Naive thymus-derived CD4-positive, alpha-beta T cell (primary cell): ENCODE measurements at regions of chr10 and their contacts with region 1.

Region 1: GRCh38 chr10:11472158-11472753 is 139.2 kb downstream of the USP6NL start:
- DNase-seq: peak; percentile 51 to 74 (median 63)
- ATAC-seq: peak; percentile 94
- H3K4me3 ChIP-seq: no peak overlapping the region
- H3K4me3 Mint-ChIP-seq: no peak overlapping the region
- H3K27ac ChIP-seq: no peak overlapping the region
- H3K27ac Mint-ChIP-seq: peak overlapping the region in 3 of 9 donors; percentile 41 to 85 (median 56)
- H3K4me1 ChIP-seq: no peaks in the 10 kb centered on the region
- H3K4me1 Mint-ChIP-seq: peaks cover 0 to 4% (median 0%) of the 10 kb centered on the region in 7 donors
- H3K27me3 ChIP-seq: no peaks in the 10 kb centered on the region
- H3K27me3 Mint-ChIP-seq: peaks cover 0 to 6% (median 0%) of the 10 kb centered on the region in 5 donors

Region 2: DNA sequence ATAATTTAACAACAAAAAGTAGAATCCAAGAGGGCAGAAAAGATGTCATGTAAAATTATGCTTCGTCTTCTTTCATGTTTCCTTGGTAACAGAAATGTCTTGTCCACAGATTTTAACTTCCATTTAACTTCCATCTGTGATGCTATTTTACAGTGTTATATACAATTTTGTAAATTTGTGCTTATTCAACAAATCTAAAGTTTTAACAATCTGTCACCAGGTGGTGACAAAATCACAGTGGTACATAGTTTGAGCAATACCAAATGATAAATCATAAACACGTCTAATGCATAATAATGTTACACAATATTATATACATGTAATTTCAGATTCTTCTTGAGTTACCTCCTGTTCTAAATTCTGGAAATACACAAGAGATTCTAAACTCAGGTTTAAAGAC is 1239.0 kb before region 1 on chr10:
- CTCF ChIA-PET with region 1: no interaction called
- POLR2A ChIA-PET with region 1: no interaction called
- intact Hi-C with region 1: loop called in 1 of 2 experiments (anchors 10 kb)
- DNase-seq: no peak
- ATAC-seq: no peak
- H3K4me3 ChIP-seq: no peak overlapping the region
- H3K4me3 Mint-ChIP-seq: no peak overlapping the region
- H3K27ac ChIP-seq: no peak overlapping the region
- H3K27ac Mint-ChIP-seq: no peak overlapping the region
- H3K4me1 ChIP-seq: no peaks in the 10 kb centered on the region
- H3K4me1 Mint-ChIP-seq: peaks cover 0 to 2% (median 0%) of the 10 kb centered on the region in 7 donors
- H3K27me3 ChIP-seq: no peaks in the 10 kb centered on the region
- H3K27me3 Mint-ChIP-seq: peaks cover 0 to 23% (median 17%) of the 10 kb centered on the region in 5 donors

Region 3: DNA sequence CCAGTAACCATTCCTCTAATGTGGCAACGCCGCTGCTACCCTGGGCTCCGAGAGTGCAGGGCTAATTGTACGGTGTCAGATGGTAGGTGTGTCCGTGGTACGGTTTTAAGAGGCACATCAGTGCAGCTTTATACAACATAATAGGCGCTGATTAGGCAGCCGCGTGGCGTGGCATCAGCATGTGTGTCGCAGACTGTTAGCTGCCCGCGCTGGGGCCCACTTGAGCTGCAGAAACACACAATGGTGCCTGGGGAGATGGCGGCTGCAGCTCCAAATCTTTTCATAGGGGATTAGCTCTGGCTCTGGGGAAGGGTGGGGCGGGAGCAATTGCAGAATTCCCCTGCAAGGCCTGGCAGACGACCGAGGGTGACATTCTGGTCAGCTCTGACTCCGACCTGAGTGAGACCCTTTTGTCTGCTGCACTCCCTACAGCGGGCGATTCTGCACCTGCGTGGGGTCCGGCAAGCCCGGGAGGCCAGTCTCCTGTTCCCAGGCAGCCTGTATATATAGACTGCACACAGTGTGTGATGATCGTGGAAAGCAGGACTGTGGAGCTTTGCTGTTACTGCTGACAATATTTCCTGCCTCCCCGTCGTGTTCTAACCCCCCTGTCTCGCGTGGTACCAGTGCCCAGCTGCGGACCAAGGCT is 1177.3 kb before region 1 on chr10:
- CTCF ChIA-PET with region 1: no interaction called
- POLR2A ChIA-PET with region 1: no interaction called
- intact Hi-C with region 1: no loop called
- DNase-seq: no peak
- ATAC-seq: no peak
- H3K4me3 ChIP-seq: no peak overlapping the region
- H3K4me3 Mint-ChIP-seq: no peak overlapping the region
- H3K27ac ChIP-seq: no peak overlapping the region
- H3K27ac Mint-ChIP-seq: no peak overlapping the region
- H3K4me1 ChIP-seq: no peaks in the 10 kb centered on the region
- H3K4me1 Mint-ChIP-seq: peaks cover 0 to 1% (median 0%) of the 10 kb centered on the region in 7 donors
- H3K27me3 ChIP-seq: no peaks in the 10 kb centered on the region
- H3K27me3 Mint-ChIP-seq: peaks cover 0 to 5% (median 0%) of the 10 kb centered on the region in 5 donors

Region 4: GRCh38 chr10:11113156-11113555 is 359.1 kb before region 1 on chr10:
- CTCF ChIA-PET with region 1: no interaction called
- POLR2A ChIA-PET with region 1: no interaction called
- intact Hi-C with region 1: loop called (anchors 1 to 5 kb)
- DNase-seq: peak in 7 of 9 donors; percentile 48 to 69 (median 65)
- ATAC-seq: peak; percentile 97
- H3K4me3 ChIP-seq: no peak overlapping the region
- H3K4me3 Mint-ChIP-seq: peak overlapping the region in 9 of 10 donors; percentile 12 to 85 (median 63)
- H3K27ac ChIP-seq: peak overlapping the region; percentile 9
- H3K27ac Mint-ChIP-seq: peak overlapping the region in 8 of 9 donors; percentile 0 to 92 (median 72)
- H3K4me1 ChIP-seq: peaks cover 0 to 9% of the 10 kb centered on the region in 2 donors
- H3K4me1 Mint-ChIP-seq: peaks cover 10 to 56% (median 38%) of the 10 kb centered on the region in 7 donors
- H3K27me3 ChIP-seq: no peaks in the 10 kb centered on the region
- H3K27me3 Mint-ChIP-seq: peaks cover 0 to 5% (median 0%) of the 10 kb centered on the region in 5 donors

Region 5: GRCh38 chr10:11264296-11265048 is 207.8 kb before region 1 on chr10:
- CTCF ChIA-PET with region 1: no interaction called
- POLR2A ChIA-PET with region 1: no interaction called
- intact Hi-C with region 1: loop called in 1 of 2 experiments (anchors 5 kb)
- DNase-seq: no peak
- ATAC-seq: no peak
- H3K4me3 ChIP-seq: no peak overlapping the region
- H3K4me3 Mint-ChIP-seq: peak overlapping the region in 4 of 10 donors; percentile 13 to 38 (median 34)
- H3K27ac ChIP-seq: peak overlapping the region; percentile 22
- H3K27ac Mint-ChIP-seq: peak overlapping the region in 8 of 9 donors; percentile 57 to 87 (median 74)
- H3K4me1 ChIP-seq: peaks cover 18 to 22% of the 10 kb centered on the region in 2 donors
- H3K4me1 Mint-ChIP-seq: peaks cover 58 to 99% (median 94%) of the 10 kb centered on the region in 7 donors
- H3K27me3 ChIP-seq: no peaks in the 10 kb centered on the region
- H3K27me3 Mint-ChIP-seq: no peaks in the 10 kb centered on the region

Region 6: DNA sequence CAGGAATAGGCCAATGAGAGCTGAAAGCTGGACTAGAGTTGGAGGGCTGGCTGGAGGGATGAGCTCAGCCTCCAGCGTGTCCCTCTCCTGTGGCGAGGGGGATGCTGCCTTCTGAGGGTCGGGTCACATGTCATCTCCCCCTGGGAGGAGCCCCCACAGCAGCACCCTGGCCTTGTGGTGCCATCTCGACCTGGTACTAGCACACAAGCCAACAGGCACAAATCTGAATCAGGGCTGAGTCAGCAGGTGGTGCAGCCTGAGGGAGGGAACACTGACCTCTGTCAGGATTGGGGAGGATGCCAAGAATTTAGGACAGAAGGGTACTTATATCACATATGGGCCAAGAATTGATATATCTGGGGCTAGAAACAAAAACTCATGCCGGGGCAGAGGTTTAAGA is 174.1 kb before region 1 on chr10:
- CTCF ChIA-PET with region 1: no interaction called
- POLR2A ChIA-PET with region 1: no interaction called
- intact Hi-C with region 1: no loop called
- DNase-seq: no peak
- ATAC-seq: no peak
- H3K4me3 ChIP-seq: no peak overlapping the region
- H3K4me3 Mint-ChIP-seq: no peak overlapping the region
- H3K27ac ChIP-seq: no peak overlapping the region
- H3K27ac Mint-ChIP-seq: peak overlapping the region; percentile 1 to 82 (median 65)
- H3K4me1 ChIP-seq: no peaks in the 10 kb centered on the region
- H3K4me1 Mint-ChIP-seq: peaks cover 0 to 42% (median 28%) of the 10 kb centered on the region in 7 donors
- H3K27me3 ChIP-seq: no peaks in the 10 kb centered on the region
- H3K27me3 Mint-ChIP-seq: no peaks in the 10 kb centered on the region

Region 7: GRCh38 chr10:11335167-11335652 is 137.0 kb before region 1 on chr10:
- CTCF ChIA-PET with region 1: no interaction called
- POLR2A ChIA-PET with region 1: interaction called, 3 read pairs
- intact Hi-C with region 1: loop called (anchors 5 to 10 kb)
- DNase-seq: no peak
- ATAC-seq: peak; percentile 55
- H3K4me3 ChIP-seq: no peak overlapping the region
- H3K4me3 Mint-ChIP-seq: peak overlapping the region in 3 of 10 donors; percentile 1 to 52 (median 44)
- H3K27ac ChIP-seq: no peak overlapping the region
- H3K27ac Mint-ChIP-seq: peak overlapping the region; percentile 1 to 90 (median 77)
- H3K4me1 ChIP-seq: peaks cover 0 to under 1% of the 10 kb centered on the region in 2 donors
- H3K4me1 Mint-ChIP-seq: peaks cover 7 to 64% (median 51%) of the 10 kb centered on the region in 7 donors
- H3K27me3 ChIP-seq: no peaks in the 10 kb centered on the region
- H3K27me3 Mint-ChIP-seq: no peaks in the 10 kb centered on the region

Region 8: GRCh38 chr10:11403116-11403515 is 69.1 kb before region 1 on chr10:
- CTCF ChIA-PET with region 1: no interaction called
- POLR2A ChIA-PET with region 1: no interaction called
- intact Hi-C with region 1: loop called in 1 of 2 experiments (anchors 5 kb)
- DNase-seq: peak; percentile 25 to 90 (median 84)
- ATAC-seq: peak; percentile 95
- H3K4me3 ChIP-seq: peak overlapping the region; percentile 45
- H3K4me3 Mint-ChIP-seq: peak overlapping the region; percentile 74 to 87 (median 80)
- H3K27ac ChIP-seq: peak overlapping the region; percentile 57
- H3K27ac Mint-ChIP-seq: peak overlapping the region; percentile 89 to 98 (median 93)
- H3K4me1 ChIP-seq: peaks cover 45 to 48% of the 10 kb centered on the region in 2 donors
- H3K4me1 Mint-ChIP-seq: peaks cover 46 to 89% (median 81%) of the 10 kb centered on the region in 7 donors
- H3K27me3 ChIP-seq: no peaks in the 10 kb centered on the region
- H3K27me3 Mint-ChIP-seq: no peaks in the 10 kb centered on the region

Region 9: GRCh38 chr10:11411926-11412545 is 60.2 kb before region 1 on chr10:
- CTCF ChIA-PET with region 1: no interaction called
- POLR2A ChIA-PET with region 1: no interaction called
- intact Hi-C with region 1: loop called in 1 of 2 experiments (anchors 1 kb)
- DNase-seq: no peak
- ATAC-seq: no peak
- H3K4me3 ChIP-seq: no peak overlapping the region
- H3K4me3 Mint-ChIP-seq: peak overlapping the region in 1 of 10 donors; percentile 4
- H3K27ac ChIP-seq: no peak overlapping the region
- H3K27ac Mint-ChIP-seq: peak overlapping the region in 1 of 9 donors; percentile 5
- H3K4me1 ChIP-seq: peaks cover 13 to 16% of the 10 kb centered on the region in 2 donors
- H3K4me1 Mint-ChIP-seq: peaks cover 8 to 32% (median 23%) of the 10 kb centered on the region in 7 donors
- H3K27me3 ChIP-seq: no peaks in the 10 kb centered on the region
- H3K27me3 Mint-ChIP-seq: peaks cover 0 to 17% (median 0%) of the 10 kb centered on the region in 5 donors

Region 10: DNA sequence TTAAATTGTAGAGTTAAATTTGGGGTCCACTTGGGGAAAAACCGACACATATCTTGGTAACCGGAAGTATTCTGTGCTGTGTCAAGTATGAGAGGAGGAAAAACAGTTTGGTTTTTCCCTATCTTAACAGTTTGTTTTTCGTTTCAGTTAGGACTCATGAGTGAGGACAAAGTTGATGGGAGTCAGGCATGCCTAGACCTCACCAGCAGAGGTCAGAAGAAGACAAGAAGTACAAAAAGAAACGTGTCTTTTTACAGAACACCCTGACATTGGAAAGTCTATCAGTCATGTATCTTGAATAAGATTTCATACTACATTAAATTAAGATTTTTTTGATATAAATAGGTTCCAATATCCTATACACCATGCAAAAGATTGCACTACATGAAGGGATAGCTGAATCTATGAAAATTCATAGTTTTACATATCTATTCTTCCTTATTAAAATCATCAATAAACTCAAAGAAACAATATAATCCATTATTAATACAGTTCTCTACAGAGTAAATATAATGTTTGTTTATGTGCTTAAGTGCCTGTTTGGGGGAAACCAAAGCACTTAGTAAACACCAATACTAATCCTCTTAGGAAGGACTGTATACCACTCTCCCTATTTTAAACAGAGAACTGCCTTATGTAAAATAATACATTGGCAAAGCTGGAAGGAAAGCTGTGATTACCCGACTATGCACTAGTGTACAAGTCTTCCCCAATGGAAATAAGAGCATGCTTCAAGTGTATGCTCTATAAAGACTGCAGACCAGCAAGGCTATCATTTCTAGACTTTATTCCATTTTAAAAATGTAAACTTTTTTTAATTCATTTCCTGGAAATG is 43.6 kb after region 1 on chr10:
- CTCF ChIA-PET with region 1: no interaction called
- POLR2A ChIA-PET with region 1: no interaction called
- intact Hi-C with region 1: no loop called
- DNase-seq: peak in 7 of 9 donors; percentile 45 to 75 (median 64)
- ATAC-seq: peak; percentile 81
- H3K4me3 ChIP-seq: no peak overlapping the region
- H3K4me3 Mint-ChIP-seq: no peak overlapping the region
- H3K27ac ChIP-seq: no peak overlapping the region
- H3K27ac Mint-ChIP-seq: peak overlapping the region in 1 of 9 donors; percentile 33
- H3K4me1 ChIP-seq: peaks cover 0 to 5% of the 10 kb centered on the region in 2 donors
- H3K4me1 Mint-ChIP-seq: peaks cover 0 to 16% (median 4%) of the 10 kb centered on the region in 7 donors
- H3K27me3 ChIP-seq: no peaks in the 10 kb centered on the region
- H3K27me3 Mint-ChIP-seq: peaks cover 0 to 36% (median 0%) of the 10 kb centered on the region in 5 donors